ENCODE measurements at regions of chr7 and their contacts with region 1.

Region 1: GRCh38 chr7:99325545-99326407 is at the start of gene ARPC1A:
- DNase-seq: peak; percentile 75 to 97 (median 81)

Region 2: DNA sequence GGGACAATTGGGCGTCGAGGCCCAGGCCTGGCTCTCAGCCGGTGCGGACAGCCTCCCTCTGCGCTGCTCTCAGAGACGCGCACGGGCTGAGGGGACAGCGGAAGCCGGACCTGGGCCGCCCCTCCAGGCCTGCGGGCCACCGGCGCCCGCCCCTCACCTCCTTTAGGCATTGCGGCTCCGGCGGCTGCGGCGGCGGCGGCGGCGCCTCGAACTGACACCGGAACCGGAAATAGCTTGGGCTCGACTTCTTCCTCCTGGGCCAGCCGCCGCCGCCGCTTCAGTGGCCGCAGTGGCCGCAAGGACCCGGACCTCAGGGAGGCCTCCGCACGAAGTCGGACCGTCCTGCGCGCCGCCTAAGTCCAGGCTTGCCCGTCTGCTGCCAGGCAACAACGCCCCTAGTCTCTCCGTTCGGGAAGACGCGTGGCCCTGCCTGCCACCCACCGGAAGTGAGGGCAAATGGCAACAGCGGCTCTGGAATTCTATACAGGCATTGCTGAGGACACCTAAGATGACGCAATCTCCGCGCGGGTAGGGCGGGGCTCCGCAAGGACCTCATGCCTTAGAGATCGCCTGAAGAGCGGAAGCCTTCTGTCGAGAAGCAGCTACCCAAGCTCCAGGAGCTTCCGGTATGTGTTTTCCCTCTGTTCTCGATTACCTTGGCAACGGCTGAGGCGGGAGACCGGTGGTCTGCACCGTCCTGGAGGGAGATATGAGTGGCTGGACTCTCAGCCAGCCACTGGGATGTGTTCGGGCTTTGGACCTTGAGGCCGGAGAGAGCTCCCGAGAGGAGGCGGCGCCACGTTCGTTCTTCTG is 82.8 kb after region 1 on chr7 and contains the starts of genes BUD31 and PDAP1:
- intact Hi-C with region 1: loop called (anchors 10 kb)
- DNase-seq: peak; percentile 86 to 99 (median 90)